ENCODE measurements at regions of chr2 and their contacts with region 1.

Region 1: DNA sequence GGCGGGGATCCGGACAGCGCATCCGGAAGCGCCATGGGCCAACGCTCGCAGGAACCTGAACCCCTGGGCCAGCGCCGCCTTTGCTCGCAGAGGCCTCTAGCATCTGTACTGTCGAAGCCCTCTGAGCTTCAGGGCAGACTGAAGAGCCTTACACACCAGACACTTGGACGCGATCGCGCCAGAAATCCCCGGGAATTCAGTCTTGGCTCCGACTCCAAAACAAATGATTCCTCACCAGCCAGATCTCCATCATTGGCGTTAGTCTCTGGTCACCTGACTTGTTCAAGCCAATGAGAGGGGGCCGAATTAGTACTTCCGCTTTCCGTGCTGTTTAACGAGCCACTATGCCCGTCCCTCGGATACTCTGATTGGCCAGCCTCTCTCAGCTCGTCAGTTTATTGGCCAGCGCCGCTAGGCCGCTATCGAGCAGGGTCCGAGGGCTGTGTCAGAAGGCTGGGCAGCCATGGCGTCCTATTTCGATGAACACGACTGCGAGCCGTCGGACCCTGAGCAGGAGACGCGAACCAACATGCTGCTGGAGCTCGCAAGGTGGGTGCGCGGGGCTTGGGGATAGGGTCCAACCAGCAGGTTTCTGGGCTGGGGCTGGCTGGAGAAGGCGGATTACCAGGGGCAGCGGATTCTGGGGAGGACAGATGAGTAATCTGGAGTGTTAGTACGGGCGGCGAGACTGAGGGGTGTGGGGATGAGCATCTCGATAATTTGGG is at the start of gene RNF181:
- DNase-seq: peak; percentile 98
- H3K4me3 Mint-ChIP-seq: peak within 1 kb of the TSS; percentile 94
- H3K27ac Mint-ChIP-seq: peak within 1 kb of the TSS; percentile 90
- H3K4me1 Mint-ChIP-seq: peaks cover 20% of the 10 kb centered on the region
- H3K27me3 Mint-ChIP-seq: no peaks in the 10 kb centered on the region
- total RNA-seq, gene RNF181: 111 and 116 TPM in 2 replicates

Region 2: GRCh38 chr2:85255813-85256594 is 339.5 kb before region 1 on chr2:
- intact Hi-C with region 1: no loop called
- DNase-seq: no peak
- H3K4me3 Mint-ChIP-seq: no peak overlapping the region
- H3K27ac Mint-ChIP-seq: no peak overlapping the region
- H3K4me1 Mint-ChIP-seq: no peaks in the 10 kb centered on the region
- H3K27me3 Mint-ChIP-seq: no peaks in the 10 kb centered on the region

Region 3: DNA sequence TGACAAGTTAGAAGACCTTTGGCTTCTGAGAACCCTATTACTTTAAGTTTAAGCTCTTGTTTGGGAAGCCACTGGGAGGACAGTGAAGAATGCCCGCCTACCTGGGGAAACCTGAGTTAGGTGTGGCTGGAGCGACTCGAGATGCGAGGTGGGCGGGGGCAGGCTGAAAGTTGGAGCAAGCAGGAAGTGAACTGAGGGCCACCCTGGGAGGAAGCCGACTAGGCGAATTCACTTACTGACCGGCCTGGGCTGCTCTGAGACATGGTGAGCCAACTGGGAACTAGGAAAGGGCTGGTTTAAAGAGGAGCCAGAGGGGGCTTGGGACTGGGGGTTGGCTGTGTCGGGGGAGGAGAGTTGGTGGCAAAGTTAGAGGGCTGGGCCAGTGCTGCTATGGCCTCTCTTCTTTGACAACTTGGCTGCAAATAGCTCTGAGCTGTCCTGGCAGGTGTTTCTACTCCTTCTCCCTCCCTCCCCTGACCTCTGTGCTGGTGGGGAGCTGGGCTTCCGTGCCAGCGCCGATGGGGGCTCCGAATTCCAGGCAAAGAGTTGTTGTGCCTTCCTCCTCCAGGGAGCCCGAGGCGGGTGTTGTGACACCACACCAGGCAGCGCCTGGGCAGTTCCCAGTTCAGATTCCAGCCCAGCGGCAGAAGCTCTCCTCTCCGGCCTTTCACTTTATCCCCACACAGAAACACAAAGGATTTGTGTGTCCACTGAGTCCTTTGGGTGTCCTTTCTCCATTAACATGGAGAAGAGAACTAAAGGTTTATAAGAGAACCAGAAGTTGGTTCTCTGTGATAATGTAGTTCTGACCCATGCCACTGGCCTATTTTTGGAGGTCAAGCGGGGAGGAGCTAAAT is 17.8 kb before region 1 on chr2 and contains the start of gene VAMP8:
- intact Hi-C with region 1: loop called (anchors 2 kb)
- DNase-seq: peak; percentile 88
- H3K4me3 Mint-ChIP-seq: peak within 1 kb of the TSS; percentile 95
- H3K27ac Mint-ChIP-seq: peak within 1 kb of the TSS; percentile 81
- H3K4me1 Mint-ChIP-seq: peaks cover 30% of the 10 kb centered on the region
- H3K27me3 Mint-ChIP-seq: peaks cover 2% of the 10 kb centered on the region
- total RNA-seq, gene VAMP8: 90.9 and 91.3 TPM in 2 replicates

Region 4: DNA sequence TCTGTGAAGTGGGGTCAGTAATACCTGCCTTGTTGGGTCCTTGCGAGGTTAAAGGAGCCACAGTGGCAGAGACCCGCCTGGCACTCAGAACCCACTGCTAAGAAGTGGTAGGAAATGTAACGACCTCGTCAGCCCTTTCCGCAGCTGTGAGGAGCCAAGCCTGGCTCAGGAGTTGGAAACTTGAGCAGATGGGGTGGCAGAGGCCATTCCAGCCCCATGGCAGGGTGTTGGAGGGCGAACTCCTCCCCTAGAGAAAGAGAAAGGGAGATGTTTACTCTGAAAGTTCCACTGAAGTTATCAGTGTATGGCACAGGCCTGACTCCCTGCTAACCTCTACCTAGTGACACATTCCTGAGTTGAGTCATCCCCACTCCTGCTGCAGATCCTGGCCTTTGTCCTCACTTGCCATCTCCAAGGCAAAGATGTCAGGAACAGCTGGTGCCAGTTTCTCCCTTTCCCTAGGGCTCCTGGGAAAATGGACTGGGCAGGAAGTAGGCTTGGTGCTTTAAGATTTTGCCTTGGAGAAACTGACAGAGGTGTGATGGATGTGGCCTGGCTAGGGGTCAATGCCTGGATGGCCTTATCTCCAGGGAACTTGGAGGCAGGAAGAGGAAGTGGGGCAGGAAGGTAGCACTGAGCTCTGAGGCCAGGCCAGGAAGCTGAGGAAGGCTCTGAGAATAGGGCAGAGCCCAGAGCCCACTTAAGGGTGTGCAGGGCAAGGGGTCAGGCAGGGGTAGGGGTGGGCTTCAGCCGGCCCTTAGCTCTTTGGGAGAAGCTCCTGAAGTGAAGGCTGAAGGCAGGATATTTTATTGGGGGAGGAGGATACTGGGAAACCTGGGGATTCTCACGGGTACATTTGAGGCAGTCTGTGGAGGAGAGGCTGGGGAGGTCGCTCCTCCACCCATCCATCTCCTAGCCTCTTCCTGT is 10.3 kb before region 1 on chr2:
- intact Hi-C with region 1: loop called (anchors 1 kb)
- DNase-seq: peak; percentile 76
- H3K4me3 Mint-ChIP-seq: peak overlapping the region; percentile 93
- H3K27ac Mint-ChIP-seq: peak overlapping the region; percentile 95
- H3K4me1 Mint-ChIP-seq: peaks cover 47% of the 10 kb centered on the region
- H3K27me3 Mint-ChIP-seq: no peaks in the 10 kb centered on the region

Region 5: DNA sequence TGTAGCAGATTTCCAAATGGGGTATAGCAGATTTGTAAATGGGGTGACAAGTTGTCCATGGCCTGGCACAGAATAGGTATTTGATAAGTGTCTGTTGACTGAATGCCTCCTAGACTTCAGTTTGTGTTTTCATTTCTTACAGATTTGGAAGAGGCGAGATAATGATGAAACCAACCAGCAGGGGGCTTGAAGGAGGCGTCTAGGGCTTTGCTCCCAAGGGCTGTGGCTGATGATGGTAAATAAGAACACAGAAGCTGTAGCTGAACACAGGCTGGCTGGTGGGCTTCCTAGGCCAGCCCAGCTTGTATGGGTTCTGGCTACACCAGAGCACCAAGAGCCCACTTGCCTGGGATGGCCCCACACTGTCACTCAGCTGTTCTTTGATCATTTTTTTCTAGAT is 53.2 kb after region 1 on chr2:
- intact Hi-C with region 1: no loop called
- DNase-seq: peak; percentile 74
- H3K4me3 Mint-ChIP-seq: no peak overlapping the region
- H3K27ac Mint-ChIP-seq: no peak overlapping the region
- H3K4me1 Mint-ChIP-seq: peaks cover 2% of the 10 kb centered on the region
- H3K27me3 Mint-ChIP-seq: no peaks in the 10 kb centered on the region

Region 6: DNA sequence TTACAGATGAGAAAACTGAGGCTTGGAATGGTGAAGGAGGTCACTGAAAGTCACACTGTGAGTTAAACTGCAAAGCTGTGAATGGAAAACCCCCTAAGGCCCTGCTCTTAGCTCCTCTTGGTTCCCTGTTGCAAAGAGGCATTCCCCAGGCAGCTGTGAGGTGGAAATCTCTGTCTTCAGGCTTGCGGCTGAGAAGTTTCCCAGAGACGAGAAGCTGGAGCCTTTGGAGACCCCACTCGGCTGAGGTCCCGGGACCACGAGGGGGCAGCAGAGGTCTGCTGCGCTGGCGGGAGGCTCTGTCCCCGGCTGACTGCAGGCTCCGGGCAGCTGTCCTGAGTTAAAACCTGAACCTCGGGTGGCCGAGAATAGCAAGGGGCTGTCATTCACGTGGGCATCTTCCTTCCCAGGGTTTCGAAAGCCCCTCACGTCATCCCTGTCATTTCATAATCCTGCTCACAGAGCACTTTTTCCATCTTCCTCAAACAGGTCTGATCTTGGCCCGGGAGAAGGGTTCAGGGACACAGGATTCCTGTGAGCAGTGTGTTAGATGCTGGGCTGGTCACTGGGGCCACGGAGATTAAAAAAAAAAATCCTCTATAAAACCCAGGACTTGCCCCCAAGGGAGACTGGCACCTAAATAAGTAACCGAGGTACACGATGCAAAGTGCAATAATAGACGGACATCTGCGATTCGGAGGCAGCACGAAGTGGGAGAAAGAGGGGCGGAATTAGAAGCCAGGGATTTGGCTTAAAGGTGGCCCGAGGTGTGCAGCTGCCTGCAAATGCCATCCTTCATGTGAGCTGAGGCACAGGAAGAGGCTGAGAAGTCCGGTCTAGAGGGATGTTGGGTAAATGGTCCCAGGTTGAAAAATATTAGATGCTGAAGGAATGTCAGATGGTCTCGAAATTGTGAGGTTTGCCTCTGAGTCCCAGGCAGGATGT is 133.7 kb after region 1 on chr2:
- intact Hi-C with region 1: no loop called
- DNase-seq: peak; percentile 93
- H3K4me3 Mint-ChIP-seq: no peak overlapping the region
- H3K27ac Mint-ChIP-seq: no peak overlapping the region
- H3K4me1 Mint-ChIP-seq: peaks cover 3% of the 10 kb centered on the region
- H3K27me3 Mint-ChIP-seq: peaks cover 32% of the 10 kb centered on the region

Measured in activated CD4-positive, alpha-beta T cell treated with anti-CD3 and anti-CD28 coated beads, Interleukin-2, amount 10 ng/mL, durations not matched to agents 24 days and 14 days (primary cell).